GM10248 (cell line): ENCODE measurements at regions of chr6 and their contacts with region 1.

Region 1: DNA sequence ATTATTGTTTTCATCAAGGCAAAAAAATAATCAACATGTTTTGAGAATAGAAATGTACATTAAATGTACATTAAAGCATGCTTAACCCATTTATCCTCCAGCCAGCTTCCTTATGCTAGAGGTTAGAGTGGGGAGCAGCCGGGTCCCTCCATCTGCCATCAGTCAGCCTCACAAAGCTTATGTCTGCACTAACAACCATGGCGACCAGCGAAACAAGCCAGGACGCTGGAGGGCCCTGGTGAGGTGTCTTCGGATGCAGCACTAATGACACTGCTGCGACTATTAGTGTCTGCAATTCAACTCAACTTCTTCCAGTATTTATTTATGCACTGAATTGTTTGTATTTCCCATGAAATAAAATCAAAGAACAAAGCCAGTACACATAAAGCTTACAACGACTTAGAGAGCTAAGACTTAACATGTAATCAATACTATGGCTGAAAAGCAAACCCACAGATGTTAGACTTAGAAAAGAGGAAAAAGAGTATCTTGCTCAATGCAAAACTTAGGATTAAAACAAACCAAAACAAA is 6.8 kb downstream of the CLDN20 start:
- DNase-seq: no peak
- CTCF ChIP-seq: no peak

Region 2: DNA sequence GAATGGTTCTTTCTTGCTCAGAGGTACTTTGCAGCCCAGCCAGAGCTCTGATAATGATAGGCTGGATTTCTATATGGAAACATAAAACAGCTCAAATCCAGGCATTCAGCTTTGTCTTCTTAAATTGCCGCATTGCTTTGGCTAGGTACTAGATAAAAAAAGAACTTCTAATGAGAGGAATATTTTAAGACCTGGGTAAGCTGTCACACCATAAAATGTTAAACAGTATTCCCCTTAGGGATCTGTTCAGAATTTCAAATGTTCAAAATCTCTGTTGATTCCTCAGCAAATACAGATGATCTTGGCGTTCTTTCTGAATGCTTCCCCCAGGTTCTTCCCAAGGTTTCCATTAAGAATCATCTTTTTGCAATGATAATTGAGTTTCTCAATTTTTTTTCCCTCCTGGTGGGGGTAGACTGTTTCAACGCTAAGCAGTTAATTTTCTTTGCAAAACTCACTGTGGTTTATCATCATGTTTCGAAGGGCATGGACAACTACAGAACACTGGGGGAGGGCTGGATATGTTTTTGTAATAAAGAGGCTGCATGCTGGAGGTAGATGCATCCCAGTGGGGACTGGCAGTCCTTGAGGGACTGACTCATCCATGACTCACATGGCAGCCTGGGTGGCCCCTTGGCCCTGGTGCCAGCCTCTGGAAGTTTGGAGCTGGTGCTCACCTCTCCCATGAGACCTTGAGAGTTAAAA is 244.5 kb before region 1 on chr6:
- CTCF ChIA-PET with region 1: no interaction called
- POLR2A ChIA-PET with region 1: no interaction called
- DNase-seq: no peak
- CTCF ChIP-seq: no peak

Region 3: GRCh38 chr6:155259204-155259603 is 11.4 kb before region 1 on chr6:
- CTCF ChIA-PET with region 1: interaction called, 16 read pairs
- POLR2A ChIA-PET with region 1: no interaction called
- DNase-seq: no peak
- CTCF ChIP-seq: no peak

Region 4: GRCh38 chr6:155373276-155373675 is 102.7 kb after region 1 on chr6:
- CTCF ChIA-PET with region 1: no interaction called
- POLR2A ChIA-PET with region 1: no interaction called
- DNase-seq: no peak
- CTCF ChIP-seq: no peak